ENCODE measurements at regions of chr7 and their contacts with region 1.

Region 1: DNA sequence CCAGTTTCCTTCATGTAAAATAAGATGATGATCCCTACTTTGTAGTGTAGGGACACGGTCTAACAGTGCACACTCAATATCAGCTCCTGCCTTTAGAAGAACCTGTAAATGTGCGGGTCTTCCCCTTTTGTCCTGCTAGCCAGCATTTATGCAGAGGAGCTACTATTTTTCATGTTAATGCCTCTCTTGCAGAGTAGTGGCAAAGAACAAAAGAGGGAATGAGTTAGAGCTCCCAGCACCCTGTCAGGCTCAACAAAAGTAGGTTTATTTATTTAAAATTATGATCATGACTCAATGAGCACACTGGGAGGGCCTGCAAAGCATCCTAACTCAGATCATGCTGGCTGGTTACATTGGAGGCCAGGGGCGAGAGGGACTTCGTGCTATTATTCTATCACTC is 414.5 kb upstream of the COBL start:
- DNase-seq: no peak
- ATAC-seq: peak; percentile 91
- H3K4me3 Mint-ChIP-seq: peak overlapping the region; percentile 23; the same call in 1 of the 2 replicates
- H3K27ac Mint-ChIP-seq: no peak overlapping the region
- H3K4me1 Mint-ChIP-seq: peaks cover 30% of the 10 kb centered on the region
- H3K27me3 Mint-ChIP-seq: peaks cover 100% of the 10 kb centered on the region
- CTCF ChIP-seq: no peak

Region 2: DNA sequence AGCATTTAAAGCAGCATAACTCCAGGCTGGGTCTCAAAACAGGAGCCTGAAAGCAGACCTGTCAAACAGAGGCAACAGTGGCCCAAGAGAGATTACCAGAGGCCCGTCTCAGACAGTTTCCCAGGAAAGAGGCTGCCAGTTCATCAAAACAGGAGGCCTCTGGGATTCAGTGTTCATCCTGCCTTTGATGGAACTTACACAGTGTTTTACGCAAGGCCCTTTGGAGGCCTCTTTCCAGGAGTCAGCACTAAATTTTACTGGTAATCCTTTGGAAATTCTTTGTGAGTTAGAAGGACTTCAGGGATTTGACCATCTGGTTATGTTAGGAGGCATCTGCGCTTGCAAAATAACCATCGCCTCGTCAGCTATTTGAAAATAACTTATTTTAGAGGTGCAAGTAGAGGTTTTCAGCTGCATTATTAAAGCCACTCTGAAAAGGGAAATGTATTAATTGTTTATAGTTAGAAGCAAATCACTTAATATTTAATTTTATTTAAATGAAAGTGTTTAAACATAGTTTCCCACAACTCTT is 86.7 kb after region 1 on chr7:
- CTCF ChIA-PET with region 1: no interaction called
- POLR2A ChIA-PET with region 1: no interaction called
- DNase-seq: no peak
- ATAC-seq: no peak
- H3K4me3 Mint-ChIP-seq: no peak overlapping the region
- H3K27ac Mint-ChIP-seq: no peak overlapping the region
- H3K4me1 Mint-ChIP-seq: no peaks in the 10 kb centered on the region
- H3K27me3 Mint-ChIP-seq: no peaks in the 10 kb centered on the region; the same call in 1 of the 2 replicates
- CTCF ChIP-seq: no peak

Region 3: GRCh38 chr7:52168085-52168484 is 437.0 kb after region 1 on chr7:
- CTCF ChIA-PET with region 1: interaction called, 4 read pairs
- POLR2A ChIA-PET with region 1: interaction called, 12 read pairs
- DNase-seq: peak; percentile 50
- ATAC-seq: peak; percentile 73
- H3K4me3 Mint-ChIP-seq: no peak overlapping the region
- H3K27ac Mint-ChIP-seq: no peak overlapping the region
- H3K4me1 Mint-ChIP-seq: peaks cover 23% of the 10 kb centered on the region
- H3K27me3 Mint-ChIP-seq: no peaks in the 10 kb centered on the region
- CTCF ChIP-seq: peak; percentile 45